Tibial artery (tissue), 4 donors: ENCODE measurements at regions of chr6 and their contacts with region 1.

Region 1: GRCh38 chr6:132131758-132132157 is 180.6 kb upstream of the CCN2 start:
- DNase-seq: peak; percentile 59 to 80
- H3K4me3 ChIP-seq: no peak overlapping the region
- H3K27ac ChIP-seq: peak overlapping the region; percentile 83
- H3K4me1 ChIP-seq: peaks cover 0 to 45% (median 28%) of the 10 kb centered on the region in 4 donors
- H3K27me3 ChIP-seq: no peaks in the 10 kb centered on the region
- CTCF ChIP-seq: no peak

Region 2: GRCh38 chr6:131949909-131950766 is 181.6 kb before region 1 on chr6:
- intact Hi-C with region 1: loop called (anchors 5 kb)
- DNase-seq: peak; percentile 78 to 89
- H3K4me3 ChIP-seq: peak overlapping the region; percentile 89
- H3K27ac ChIP-seq: peak overlapping the region; percentile 94 to 96
- H3K4me1 ChIP-seq: peaks cover 0 to 54% (median 28%) of the 10 kb centered on the region in 4 donors
- H3K27me3 ChIP-seq: no peaks in the 10 kb centered on the region
- CTCF ChIP-seq: peak; percentile 59 to 61